ENCODE measurements at regions of chr15 and their contacts with region 1.

Region 1: DNA sequence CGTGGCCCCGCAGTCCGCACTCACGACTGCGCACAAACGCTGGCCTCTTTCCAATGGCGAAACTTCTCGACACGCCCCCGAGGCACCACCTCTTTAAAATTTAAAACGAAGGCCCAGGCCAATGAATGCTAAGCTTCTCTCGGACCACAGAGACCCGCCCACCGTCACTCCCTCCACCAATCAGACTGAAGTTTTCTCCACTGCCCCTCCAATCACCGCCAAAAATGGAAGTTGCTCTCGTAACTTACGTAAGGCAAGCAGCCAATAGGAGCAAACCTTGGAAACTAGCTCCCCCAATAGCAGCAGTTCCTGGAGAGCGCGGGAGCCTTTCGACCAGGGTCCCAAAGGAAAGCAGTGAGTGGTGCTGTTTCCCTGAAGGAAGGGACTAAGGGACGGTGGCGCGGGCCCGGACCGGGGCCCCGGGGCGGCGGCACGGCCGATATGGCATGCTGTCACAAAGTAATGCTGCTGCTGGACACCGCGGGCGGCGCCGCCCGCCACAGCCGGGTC is at the start of gene TICRR:
- DNase-seq: peak; percentile 97 to 98 (median 98)
- H3K4me3 ChIP-seq: peak within 1 kb of the TSS; percentile 74 to 88
- H3K4me3 Mint-ChIP-seq: peak within 1 kb of the TSS; percentile 83 to 95 (median 90)
- H3K27ac ChIP-seq: no peak within 1 kb of the TSS
- H3K27ac Mint-ChIP-seq: peak within 1 kb of the TSS; percentile 5 to 94 (median 81)
- H3K4me1 ChIP-seq: peaks cover 10% of the 10 kb centered on the region
- H3K4me1 Mint-ChIP-seq: peaks cover 11 to 19% (median 13%) of the 10 kb centered on the region in 4 donors
- H3K27me3 ChIP-seq: no peaks in the 10 kb centered on the region
- H3K27me3 Mint-ChIP-seq: peaks cover 8 to 11% of the 10 kb centered on the region in 2 donors
- total RNA-seq, gene TICRR: 0.12 to 0.14 TPM

Region 2: GRCh38 chr15:89243691-89244471 is 331.3 kb before region 1 on chr15 and contains the start of gene FANCI:
- CTCF ChIA-PET with region 1: no interaction called
- POLR2A ChIA-PET with region 1: no interaction called
- intact Hi-C with region 1: loop called (anchors 10 kb)
- DNase-seq: peak; percentile 93 to 96 (median 94)
- H3K4me3 ChIP-seq: peak within 1 kb of the TSS; percentile 95
- H3K4me3 Mint-ChIP-seq: peak within 1 kb of the TSS; percentile 91 to 98 (median 94)
- H3K27ac ChIP-seq: peak within 1 kb of the TSS; percentile 43
- H3K27ac Mint-ChIP-seq: peak within 1 kb of the TSS; percentile 80 to 92 (median 89)
- H3K4me1 ChIP-seq: peaks cover 14% of the 10 kb centered on the region
- H3K4me1 Mint-ChIP-seq: peaks cover 20 to 40% (median 30%) of the 10 kb centered on the region in 4 donors
- H3K27me3 ChIP-seq: no peaks in the 10 kb centered on the region
- H3K27me3 Mint-ChIP-seq: no peaks in the 10 kb centered on the region
- total RNA-seq, gene FANCI: 10.9 to 19.0 TPM

Region 3: GRCh38 chr15:89334510-89335288 is 240.5 kb before region 1 on chr15 and contains the start of gene POLG:
- CTCF ChIA-PET with region 1: no interaction called
- POLR2A ChIA-PET with region 1: interaction called, 3 read pairs
- intact Hi-C with region 1: loop called (anchors 10 kb)
- DNase-seq: peak; percentile 99 to 100 (median 99)
- H3K4me3 ChIP-seq: peak within 1 kb of the TSS; percentile 81 to 92
- H3K4me3 Mint-ChIP-seq: peak within 1 kb of the TSS; percentile 90 to 100 (median 94)
- H3K27ac ChIP-seq: peak within 1 kb of the TSS; percentile 69
- H3K27ac Mint-ChIP-seq: peak within 1 kb of the TSS; percentile 88 to 100 (median 98)
- H3K4me1 ChIP-seq: peaks cover 54% of the 10 kb centered on the region
- H3K4me1 Mint-ChIP-seq: peaks cover 37 to 59% (median 47%) of the 10 kb centered on the region in 4 donors
- H3K27me3 ChIP-seq: no peaks in the 10 kb centered on the region
- H3K27me3 Mint-ChIP-seq: peaks cover 2 to 7% of the 10 kb centered on the region in 2 donors
- total RNA-seq, gene POLG: 148 to 151 TPM

Region 4: GRCh38 chr15:89647191-89647851 is 72.1 kb after region 1 on chr15:
- CTCF ChIA-PET with region 1: no interaction called
- POLR2A ChIA-PET with region 1: no interaction called
- intact Hi-C with region 1: no loop called
- DNase-seq: peak in 4 of 5 donors; percentile 27 to 38 (median 32)
- H3K4me3 ChIP-seq: no peak overlapping the region
- H3K4me3 Mint-ChIP-seq: peak overlapping the region in 1 of 8 donors; percentile 48
- H3K27ac ChIP-seq: no peak overlapping the region
- H3K27ac Mint-ChIP-seq: no peak overlapping the region
- H3K4me1 ChIP-seq: no peaks in the 10 kb centered on the region
- H3K4me1 Mint-ChIP-seq: peaks cover 0 to 3% (median 1%) of the 10 kb centered on the region in 4 donors
- H3K27me3 ChIP-seq: no peaks in the 10 kb centered on the region
- H3K27me3 Mint-ChIP-seq: peaks cover 5 to 10% of the 10 kb centered on the region in 2 donors

Region 5: DNA sequence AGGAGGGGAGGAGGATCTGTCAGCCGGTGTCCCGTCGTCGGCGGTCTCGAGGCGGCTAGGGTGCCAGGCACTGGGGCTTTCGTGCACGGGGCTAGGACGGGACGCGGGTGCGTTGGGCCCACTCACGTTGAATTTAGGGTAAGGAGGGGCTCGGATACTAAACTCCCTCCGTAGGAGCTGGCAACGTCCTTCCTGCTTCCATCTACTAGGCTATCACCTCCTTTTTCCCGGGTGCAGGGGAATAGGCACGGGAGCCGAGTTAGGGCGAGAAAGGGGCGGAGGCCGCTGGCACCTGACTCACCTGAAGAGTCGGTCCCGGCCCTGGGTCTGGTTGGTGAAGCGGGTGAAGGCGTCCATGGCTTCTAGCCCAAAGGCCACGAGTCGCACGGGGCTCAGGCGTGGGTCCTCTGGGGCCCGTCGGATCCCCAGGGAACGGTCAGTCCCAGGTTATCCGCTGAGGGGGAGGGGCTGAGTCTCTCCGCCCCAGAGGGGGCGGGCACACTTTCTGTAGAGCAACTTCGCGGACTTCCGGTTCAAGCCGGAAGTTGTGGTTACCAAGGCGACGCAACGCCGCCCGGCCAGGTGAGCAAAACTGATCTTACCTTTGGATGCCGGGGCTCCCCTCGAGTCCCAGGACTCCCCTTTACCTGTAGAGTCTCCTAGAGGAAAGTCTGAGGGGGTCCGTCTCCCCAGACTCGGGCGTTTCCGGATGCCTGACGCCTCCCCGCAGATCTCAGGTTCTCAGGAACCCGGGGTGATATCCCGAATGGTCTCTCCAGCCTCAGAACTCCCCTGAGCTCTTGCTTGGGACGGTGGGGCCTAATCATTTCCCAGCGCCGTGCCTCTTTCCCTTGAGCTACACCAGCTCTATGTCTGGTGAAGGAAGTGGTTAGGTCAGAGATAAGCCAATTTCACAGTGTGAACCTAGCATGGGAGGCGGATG is 115.3 kb after region 1 on chr15 and contains the starts of genes PEX11A and WDR93:
- CTCF ChIA-PET with region 1: no interaction called
- POLR2A ChIA-PET with region 1: no interaction called
- intact Hi-C with region 1: loop called (anchors 2 kb)
- DNase-seq: peak; percentile 71 to 76 (median 73)
- H3K4me3 ChIP-seq: peak within 1 kb of the TSS; percentile 76 to 98
- H3K4me3 Mint-ChIP-seq: peak within 1 kb of the TSS; percentile 87 to 94 (median 90)
- H3K27ac ChIP-seq: peak within 1 kb of the TSS; percentile 40
- H3K27ac Mint-ChIP-seq: peak within 1 kb of the TSS; percentile 76 to 96 (median 93)
- H3K4me1 ChIP-seq: peaks cover 8% of the 10 kb centered on the region
- H3K4me1 Mint-ChIP-seq: peaks cover 5 to 21% (median 14%) of the 10 kb centered on the region in 4 donors
- H3K27me3 ChIP-seq: no peaks in the 10 kb centered on the region
- H3K27me3 Mint-ChIP-seq: no peaks in the 10 kb centered on the region
- total RNA-seq, gene PEX11A: 2.9 to 3.0 TPM
- total RNA-seq, gene WDR93: not detected